PC-3 (cell line): ENCODE measurements at regions of chr5 and their contacts with region 1.

Region 1: GRCh38 chr5:128163991-128164390 is 80.4 kb downstream of the SLC12A2 start:
- DNase-seq: peak; percentile 89
- ATAC-seq: peak; percentile 98
- H3K4me3 ChIP-seq: no peak overlapping the region
- H3K27ac ChIP-seq: peak overlapping the region; percentile 55
- H3K4me1 ChIP-seq: peaks cover 14% of the 10 kb centered on the region
- H3K27me3 ChIP-seq: no peaks in the 10 kb centered on the region
- CTCF ChIP-seq: no peak

Region 2: GRCh38 chr5:127875235-127876021 is 288.6 kb before region 1 on chr5:
- CTCF ChIA-PET with region 1: no interaction called
- POLR2A ChIA-PET with region 1: no interaction called
- intact Hi-C with region 1: loop called (anchors 5 kb)
- DNase-seq: peak; percentile 78
- ATAC-seq: peak; percentile 76
- H3K4me3 ChIP-seq: no peak overlapping the region
- H3K27ac ChIP-seq: 0 out of 2 replicates have a peak overlapping the region, but pooled peaks have one; percentile 9
- H3K4me1 ChIP-seq: peaks cover 17% of the 10 kb centered on the region
- H3K27me3 ChIP-seq: no peaks in the 10 kb centered on the region
- CTCF ChIP-seq: peak; percentile 73

Region 3: DNA sequence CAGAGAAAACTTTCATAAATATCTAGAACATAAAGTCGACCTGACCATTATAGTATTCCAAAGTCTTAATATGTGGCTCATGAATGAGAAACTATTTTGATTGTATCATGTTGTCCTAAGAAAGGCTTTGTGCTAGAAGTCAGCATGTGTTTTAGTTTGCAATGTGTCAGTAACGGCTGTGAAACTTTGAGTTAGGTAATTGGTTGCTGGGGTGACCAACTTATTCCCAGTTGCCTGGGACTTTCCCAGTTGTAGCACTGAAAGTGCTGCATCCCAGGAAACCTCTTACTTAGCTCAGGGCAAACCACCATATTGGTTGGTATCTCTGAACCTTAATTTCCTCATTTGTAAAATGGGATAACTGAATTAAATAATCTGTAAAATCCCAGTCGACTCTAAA is 195.0 kb before region 1 on chr5:
- CTCF ChIA-PET with region 1: no interaction called
- POLR2A ChIA-PET with region 1: no interaction called
- intact Hi-C with region 1: no loop called
- DNase-seq: no peak
- ATAC-seq: no peak
- H3K4me3 ChIP-seq: no peak overlapping the region
- H3K27ac ChIP-seq: peak overlapping the region; percentile 94; the same call in 1 of the 2 replicates
- H3K4me1 ChIP-seq: peaks cover 23% of the 10 kb centered on the region
- H3K27me3 ChIP-seq: no peaks in the 10 kb centered on the region
- CTCF ChIP-seq: no peak

Region 4: GRCh38 chr5:127988146-127988760 is 175.7 kb before region 1 on chr5:
- CTCF ChIA-PET with region 1: no interaction called
- POLR2A ChIA-PET with region 1: no interaction called
- intact Hi-C with region 1: no loop called
- DNase-seq: peak; percentile 97
- ATAC-seq: peak; percentile 91
- H3K4me3 ChIP-seq: no peak overlapping the region
- H3K27ac ChIP-seq: peak overlapping the region; percentile 76
- H3K4me1 ChIP-seq: peaks cover 17% of the 10 kb centered on the region
- H3K27me3 ChIP-seq: no peaks in the 10 kb centered on the region
- CTCF ChIP-seq: no peak